GM18951 (cell line): ENCODE measurements at regions of chr15 and their contacts with region 1.

Region 1: GRCh38 chr15:54082836-54083492 is 104.7 kb downstream of the UNC13C start:
- POLR2A ChIP-seq: no peak

Region 2: DNA sequence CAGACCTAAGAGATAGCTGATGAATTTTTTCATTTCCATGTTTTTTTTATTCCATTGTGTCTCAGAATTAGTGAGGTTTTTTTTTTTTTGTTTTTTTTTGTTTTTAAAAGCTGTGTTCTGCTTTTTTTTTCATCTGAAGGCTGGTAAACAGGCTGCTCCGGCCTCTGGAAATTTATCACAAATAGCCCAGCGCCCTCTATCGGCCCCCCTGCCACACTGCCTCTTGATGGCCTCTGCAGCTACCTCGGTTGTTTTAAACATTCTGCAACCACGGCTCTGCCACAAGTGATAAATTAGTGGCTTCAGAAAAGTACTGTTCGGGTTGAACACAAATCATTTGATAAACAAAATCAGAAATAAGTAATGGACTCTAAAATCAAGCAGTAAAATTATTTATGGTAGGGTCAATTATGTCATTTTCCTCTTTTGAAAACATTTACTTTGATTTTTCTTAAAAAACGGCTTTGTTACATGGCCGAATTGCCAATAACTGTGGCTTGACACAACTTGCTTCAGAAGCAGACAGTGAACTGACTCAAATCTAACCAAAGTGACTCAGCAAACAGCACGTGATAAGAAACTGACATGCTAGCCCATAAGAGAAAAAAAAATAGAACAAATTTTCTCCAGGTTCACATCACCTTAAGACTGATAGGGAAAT is 1026.0 kb after region 1 on chr15:
- in situ Hi-C with region 1: loop called (anchors 25 kb)
- POLR2A ChIP-seq: no peak